Activated T-helper 1 cell treated with anti-CD3 and anti-CD28 coated beads, Interleukin-12 subunit alpha, Interleukin-12 subunit beta, Interleukin-2, Interleukin-4 antibody, amounts not matched to agents 30 ng/mL and 10 ng/mL and 1 ng/mL, durations not matched to agents 14 hours and 24 hours and 36 hours (primary cell): ENCODE measurements at regions of chr15 and their contacts with region 1.

Region 1: GRCh38 chr15:88454867-88455810 is 12.0 kb downstream of the MRPL46 start:
- DNase-seq: no peak
- H3K4me3 Mint-ChIP-seq: no peak overlapping the region
- H3K27ac Mint-ChIP-seq: no peak overlapping the region
- H3K4me1 Mint-ChIP-seq: peaks cover 2% of the 10 kb centered on the region
- H3K27me3 Mint-ChIP-seq: no peaks in the 10 kb centered on the region

Region 2: DNA sequence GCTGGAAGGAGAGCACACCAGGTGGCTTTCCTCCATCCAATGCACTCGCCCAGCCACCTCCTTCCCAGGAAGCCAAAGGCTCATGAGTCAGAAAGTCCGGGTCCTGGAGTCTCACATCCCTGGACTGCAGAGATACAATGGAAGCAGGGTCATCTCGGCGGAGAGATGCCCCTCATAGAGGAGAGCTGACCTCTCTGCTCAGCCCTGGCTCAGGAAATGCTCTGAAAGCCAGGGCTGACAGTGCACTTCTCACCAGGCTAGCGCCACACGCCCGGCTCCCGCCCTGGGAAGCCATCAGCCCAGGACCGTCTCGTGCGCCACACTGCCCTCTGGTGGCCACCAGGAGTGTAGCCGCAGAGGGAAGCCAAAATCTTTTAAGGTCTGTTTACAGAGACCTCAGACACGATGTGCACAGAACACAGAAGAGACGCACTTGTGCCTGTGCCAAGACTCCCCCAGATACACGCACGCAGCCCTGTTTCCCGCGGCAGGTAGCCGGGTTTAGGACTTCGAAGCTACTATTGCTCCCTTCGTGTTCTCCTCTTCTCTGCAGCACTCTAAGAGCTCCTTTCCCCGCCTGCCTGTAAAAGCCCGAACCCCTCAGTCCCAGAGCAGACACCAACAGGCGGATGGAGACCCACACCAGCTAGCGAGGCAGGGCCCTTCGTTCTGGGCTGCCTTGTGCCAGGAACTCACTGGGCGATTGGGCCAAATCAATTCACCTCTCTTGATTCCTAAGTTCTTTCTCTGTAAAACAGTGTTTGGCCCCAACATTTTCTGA is 208.3 kb before region 1 on chr15:
- intact Hi-C with region 1: loop called (anchors 1 kb)
- DNase-seq: peak; percentile 42
- H3K4me3 Mint-ChIP-seq: no peak overlapping the region
- H3K27ac Mint-ChIP-seq: no peak overlapping the region
- H3K4me1 Mint-ChIP-seq: no peaks in the 10 kb centered on the region
- H3K27me3 Mint-ChIP-seq: peaks cover 6% of the 10 kb centered on the region

Region 3: GRCh38 chr15:88274553-88275460 is 180.3 kb before region 1 on chr15:
- intact Hi-C with region 1: loop called (anchors 10 kb)
- DNase-seq: peak; percentile 22
- H3K4me3 Mint-ChIP-seq: no peak overlapping the region
- H3K27ac Mint-ChIP-seq: no peak overlapping the region
- H3K4me1 Mint-ChIP-seq: no peaks in the 10 kb centered on the region
- H3K27me3 Mint-ChIP-seq: peaks cover 14% of the 10 kb centered on the region

Region 4: DNA sequence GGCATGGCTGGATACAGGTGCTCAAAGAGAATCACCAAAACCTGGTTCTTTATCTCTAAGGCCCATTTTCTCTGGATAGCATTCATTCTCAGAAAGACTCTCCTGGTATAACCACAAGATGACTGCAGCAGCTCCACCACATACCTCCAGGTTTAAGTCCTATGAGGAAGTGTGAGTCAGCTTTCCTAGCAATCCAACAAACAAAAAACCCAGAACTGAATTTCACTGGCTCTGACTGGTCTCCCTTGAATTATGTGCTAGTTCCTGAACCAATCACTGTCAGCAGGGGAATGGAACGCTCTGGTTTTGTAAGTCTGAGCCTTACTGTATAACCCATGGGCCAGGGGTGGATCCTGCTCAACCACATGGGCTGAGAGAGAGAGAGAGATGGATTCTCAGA is 15.1 kb before region 1 on chr15:
- intact Hi-C with region 1: no loop called
- DNase-seq: no peak
- H3K4me3 Mint-ChIP-seq: no peak overlapping the region
- H3K27ac Mint-ChIP-seq: no peak overlapping the region
- H3K4me1 Mint-ChIP-seq: no peaks in the 10 kb centered on the region
- H3K27me3 Mint-ChIP-seq: peaks cover 23% of the 10 kb centered on the region